Mammary epithelial cell (primary cell): ENCODE measurements at regions of chr6 and their contacts with region 1.

Region 1: GRCh38 chr6:15254070-15254841 is 8.4 kb downstream of the JARID2 start:
- DNase-seq: no peak
- H3K4me3 ChIP-seq: no peak overlapping the region
- H3K27ac ChIP-seq: no peak overlapping the region
- H3K4me1 ChIP-seq: peaks cover 11% of the 10 kb centered on the region
- H3K27me3 ChIP-seq: no peaks in the 10 kb centered on the region
- CTCF ChIP-seq: peak in 1 of 2 donors; percentile 15

Region 2: DNA sequence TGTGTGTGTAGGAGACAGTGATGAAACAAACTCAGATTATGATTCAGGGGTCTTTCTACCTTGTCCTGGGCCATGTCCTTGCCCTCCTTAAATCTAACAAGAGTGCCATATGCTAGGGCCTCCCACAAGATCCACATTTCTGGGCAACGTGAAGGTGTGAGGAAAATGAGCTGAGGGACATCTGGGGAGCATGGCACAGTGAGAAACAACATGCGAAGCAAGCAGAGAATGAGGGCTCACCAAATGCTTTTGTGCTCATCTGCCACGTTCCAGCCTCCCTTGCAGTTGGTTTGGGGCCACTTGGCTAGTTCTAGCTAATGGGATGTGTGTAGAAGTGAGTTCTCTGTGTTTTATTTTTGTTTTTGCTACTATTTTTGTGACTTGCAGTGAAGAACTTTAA is 1350.9 kb before region 1 on chr6:
- CTCF ChIA-PET with region 1: no interaction called
- dilution Hi-C with region 1: no loop called
- in situ Hi-C with region 1: no loop called
- intact Hi-C with region 1: no loop called
- DNase-seq: no peak
- H3K4me3 ChIP-seq: no peak overlapping the region
- H3K27ac ChIP-seq: no peak overlapping the region
- H3K4me1 ChIP-seq: no peaks in the 10 kb centered on the region
- H3K27me3 ChIP-seq: peaks cover 11% of the 10 kb centered on the region
- CTCF ChIP-seq: no peak

Region 3: DNA sequence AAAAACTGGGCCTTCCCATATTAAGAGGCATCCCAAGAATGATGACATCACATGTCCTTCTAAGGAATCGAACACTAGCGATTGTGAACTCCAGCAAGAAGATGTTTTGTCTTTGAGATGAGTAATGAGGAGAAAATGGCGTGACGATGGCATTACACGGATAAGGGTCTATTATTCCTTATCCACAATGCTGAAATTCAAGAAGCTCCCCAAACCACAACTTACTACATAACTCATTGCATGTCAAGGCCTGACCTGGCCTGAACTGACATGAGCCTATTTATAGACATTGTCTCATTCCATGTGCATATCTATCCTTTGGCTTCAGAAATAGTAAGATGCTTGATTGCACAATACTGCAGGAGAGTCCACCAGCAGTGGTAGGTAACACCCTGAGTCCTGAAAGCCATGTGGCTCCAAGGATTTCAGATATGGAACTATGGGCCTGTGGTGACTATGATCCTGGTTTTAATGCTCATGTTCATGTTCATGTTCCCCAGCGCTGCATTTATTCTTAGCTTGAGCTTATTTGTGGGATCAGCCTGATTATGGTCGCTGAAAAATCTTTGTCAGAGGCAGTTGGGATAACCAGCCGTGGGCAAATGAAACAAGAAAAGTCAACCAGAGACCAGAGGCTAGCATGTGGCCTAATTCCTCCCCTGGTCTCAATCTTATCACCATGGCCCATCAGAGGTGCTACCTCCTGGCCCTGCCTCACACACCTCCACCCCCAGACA is 191.6 kb before region 1 on chr6:
- CTCF ChIA-PET with region 1: no interaction called
- dilution Hi-C with region 1: no loop called
- in situ Hi-C with region 1: no loop called
- intact Hi-C with region 1: no loop called
- DNase-seq: peak; percentile 100
- H3K4me3 ChIP-seq: no peak overlapping the region
- H3K27ac ChIP-seq: peak overlapping the region; percentile 77
- H3K4me1 ChIP-seq: peaks cover 39% of the 10 kb centered on the region
- H3K27me3 ChIP-seq: no peaks in the 10 kb centered on the region
- CTCF ChIP-seq: no peak

Region 4: GRCh38 chr6:15096894-15097837 is 157.1 kb before region 1 on chr6:
- CTCF ChIA-PET with region 1: no interaction called
- dilution Hi-C with region 1: no loop called
- in situ Hi-C with region 1: no loop called
- intact Hi-C with region 1: no loop called
- DNase-seq: peak; percentile 52
- H3K4me3 ChIP-seq: no peak overlapping the region
- H3K27ac ChIP-seq: no peak overlapping the region
- H3K4me1 ChIP-seq: no peaks in the 10 kb centered on the region
- H3K27me3 ChIP-seq: no peaks in the 10 kb centered on the region
- CTCF ChIP-seq: no peak

Region 5: DNA sequence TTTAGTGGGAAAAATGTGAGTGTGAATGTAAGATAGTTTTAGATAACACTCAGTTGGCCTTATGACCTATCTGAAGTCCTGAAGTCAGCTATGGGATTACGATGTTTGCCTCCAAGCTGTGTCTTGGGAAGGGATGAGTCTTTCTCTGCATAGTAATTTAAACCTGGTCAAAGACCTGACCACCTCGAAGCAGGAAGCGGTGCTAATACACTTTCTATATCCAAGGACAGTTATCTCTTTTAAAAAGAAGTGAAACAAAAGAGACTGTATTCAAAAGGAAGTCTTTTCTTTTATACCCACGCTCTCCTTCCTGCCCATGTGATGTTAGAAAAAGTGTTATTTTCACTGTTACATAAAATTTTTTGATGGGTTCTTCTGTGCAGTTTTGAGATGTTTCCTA is 86.5 kb after region 1 on chr6:
- CTCF ChIA-PET with region 1: no interaction called
- dilution Hi-C with region 1: no loop called
- in situ Hi-C with region 1: no loop called
- intact Hi-C with region 1: no loop called
- DNase-seq: no peak
- H3K4me3 ChIP-seq: no peak overlapping the region
- H3K27ac ChIP-seq: no peak overlapping the region
- H3K4me1 ChIP-seq: peaks cover 12% of the 10 kb centered on the region
- H3K27me3 ChIP-seq: no peaks in the 10 kb centered on the region
- CTCF ChIP-seq: no peak

Region 6: DNA sequence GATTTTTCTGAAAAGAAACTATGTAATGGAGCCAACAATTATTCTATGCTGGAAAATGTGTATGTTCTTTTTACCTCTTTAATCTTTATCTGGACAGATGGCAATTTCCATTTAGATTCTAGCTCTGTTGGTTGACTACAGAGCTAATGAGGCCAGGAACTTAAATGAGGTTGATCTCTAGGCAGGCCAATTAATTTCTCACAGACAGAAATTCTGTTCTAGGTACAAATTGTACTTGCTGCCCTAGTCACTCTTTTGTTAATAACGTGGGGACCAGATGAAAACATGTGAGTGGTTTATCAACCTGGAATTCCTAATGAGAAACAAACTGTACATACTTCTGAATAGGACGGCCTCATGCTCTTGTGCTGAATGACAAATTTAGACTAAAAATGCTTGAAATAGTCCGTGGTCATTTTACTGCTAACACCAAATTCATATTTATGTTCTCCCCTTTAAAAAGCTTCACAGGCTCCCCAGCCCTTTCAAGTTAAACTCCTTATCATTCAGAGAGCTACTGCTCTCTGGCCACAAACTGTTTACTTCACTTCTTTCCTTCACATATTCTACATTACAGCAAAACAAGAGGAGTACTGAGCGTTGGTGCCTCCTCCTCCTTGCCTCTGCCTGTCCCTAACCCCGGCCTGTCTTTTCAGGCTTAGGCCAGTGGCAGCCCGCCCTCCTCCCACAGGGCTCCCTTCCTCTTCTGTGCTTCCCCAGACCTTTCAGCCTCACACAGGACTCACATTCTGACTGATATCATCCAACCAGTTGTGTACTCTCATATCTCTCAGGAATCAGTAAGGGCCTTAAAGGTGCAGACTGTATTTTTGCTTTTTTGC is 367.2 kb after region 1 on chr6:
- CTCF ChIA-PET with region 1: no interaction called
- dilution Hi-C with region 1: no loop called
- in situ Hi-C with region 1: loop called in 1 of 2 experiments (anchors 25 kb)
- intact Hi-C with region 1: loop called (anchors 5 kb)
- DNase-seq: peak; percentile 73
- H3K4me3 ChIP-seq: no peak overlapping the region
- H3K27ac ChIP-seq: peak overlapping the region; percentile 43
- H3K4me1 ChIP-seq: peaks cover 15% of the 10 kb centered on the region
- H3K27me3 ChIP-seq: no peaks in the 10 kb centered on the region
- CTCF ChIP-seq: no peak